Activated naive CD4-positive, alpha-beta T cell treated with anti-CD3 and anti-CD28 coated beads for 36 hours (primary cell): ENCODE measurements at regions of chr14 and their contacts with region 1.

Region 1: DNA sequence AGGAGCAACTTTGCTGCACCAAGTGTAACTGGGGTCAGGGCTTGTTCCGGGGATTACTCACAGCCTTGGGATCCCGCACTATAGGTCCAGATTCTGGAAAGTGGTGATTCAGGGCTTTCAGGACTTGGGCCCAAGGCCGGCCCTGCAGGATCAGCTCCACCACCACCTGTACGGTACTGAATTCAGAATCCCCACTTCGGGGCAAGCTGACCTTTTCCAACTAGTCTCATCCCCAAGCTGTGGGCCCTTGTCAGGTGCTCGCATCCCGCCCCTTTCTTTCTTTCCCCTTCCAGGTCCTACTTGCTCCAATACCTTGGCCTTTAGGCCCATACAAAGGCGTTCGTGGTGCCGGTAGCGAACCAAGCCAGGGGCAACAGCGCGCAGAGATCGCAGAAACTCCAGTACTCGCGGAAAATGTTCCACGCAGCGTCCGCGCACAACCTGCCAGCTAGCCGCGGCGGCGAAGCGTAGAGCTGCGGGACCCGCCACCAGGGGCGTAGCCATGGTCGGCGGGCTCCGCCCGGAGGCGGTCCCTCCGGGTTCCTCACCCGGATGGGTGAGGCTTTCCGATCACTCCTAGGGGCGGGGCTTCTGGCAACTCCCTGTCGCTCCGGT is 487 bp downstream of the TINF2 start:
- DNase-seq: peak; percentile 94
- H3K4me3 Mint-ChIP-seq: peak overlapping the region; percentile 97
- H3K27ac Mint-ChIP-seq: peak overlapping the region; percentile 100
- H3K4me1 Mint-ChIP-seq: peaks cover 49% of the 10 kb centered on the region
- H3K27me3 Mint-ChIP-seq: no peaks in the 10 kb centered on the region

Region 2: DNA sequence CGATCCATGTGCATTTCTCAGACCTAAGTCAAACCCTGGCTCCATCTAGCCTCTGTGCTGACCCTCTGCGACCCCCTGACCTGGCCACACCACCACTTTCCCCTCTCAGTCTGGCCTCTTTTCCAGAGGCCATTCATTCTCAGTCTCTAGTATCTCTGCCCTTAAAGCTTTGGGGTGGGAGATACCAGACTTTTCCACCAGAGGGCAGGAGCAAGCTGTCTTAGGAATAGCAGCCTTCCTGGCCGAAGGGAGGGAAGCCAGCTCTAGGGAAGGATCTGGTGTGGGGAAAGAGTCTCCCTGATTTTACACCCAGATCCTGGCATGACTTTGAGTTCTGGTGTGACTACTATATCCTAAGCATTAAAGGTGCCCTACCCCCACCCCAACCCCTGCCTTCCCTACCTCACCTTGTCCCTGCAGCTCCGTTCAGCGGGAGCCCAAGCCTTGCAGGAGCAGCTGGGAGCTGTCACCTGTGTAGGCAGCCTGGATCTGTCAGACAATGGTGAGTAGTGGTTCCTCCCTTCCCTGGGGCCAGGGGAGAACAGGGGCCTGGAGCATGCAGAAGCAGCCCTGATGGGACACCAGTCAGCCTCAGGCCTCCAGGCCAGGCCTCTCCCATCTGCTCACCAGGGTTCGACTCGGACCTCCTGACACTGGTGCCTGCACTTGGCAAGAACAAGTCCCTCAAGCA is 183.5 kb before region 1 on chr14:
- CTCF ChIA-PET with region 1: no interaction called
- intact Hi-C with region 1: loop called (anchors 2 kb)
- DNase-seq: peak; percentile 89
- H3K4me3 Mint-ChIP-seq: no peak overlapping the region
- H3K27ac Mint-ChIP-seq: peak overlapping the region; percentile 38
- H3K4me1 Mint-ChIP-seq: peaks cover 5% of the 10 kb centered on the region
- H3K27me3 Mint-ChIP-seq: peaks cover 2% of the 10 kb centered on the region

Region 3: GRCh38 chr14:24188251-24189058 is 53.5 kb before region 1 on chr14 and contains the start of gene IPO4:
- CTCF ChIA-PET with region 1: interaction called, 10 read pairs
- intact Hi-C with region 1: loop called (anchors 1 kb)
- DNase-seq: peak; percentile 97
- H3K4me3 Mint-ChIP-seq: peak within 1 kb of the TSS; percentile 85
- H3K27ac Mint-ChIP-seq: peak within 1 kb of the TSS; percentile 78
- H3K4me1 Mint-ChIP-seq: peaks cover 46% of the 10 kb centered on the region
- H3K27me3 Mint-ChIP-seq: no peaks in the 10 kb centered on the region
- total RNA-seq, gene IPO4: 64.2 to 74.5 TPM

Region 4: GRCh38 chr14:24271134-24271833 is 29.3 kb after region 1 on chr14 and contains the start of gene RABGGTA:
- CTCF ChIA-PET with region 1: interaction called, 43 read pairs
- intact Hi-C with region 1: loop called (anchors 1 kb)
- DNase-seq: peak; percentile 94
- H3K4me3 Mint-ChIP-seq: peak within 1 kb of the TSS; percentile 78
- H3K27ac Mint-ChIP-seq: peak within 1 kb of the TSS; percentile 95
- H3K4me1 Mint-ChIP-seq: peaks cover 43% of the 10 kb centered on the region
- H3K27me3 Mint-ChIP-seq: no peaks in the 10 kb centered on the region
- total RNA-seq, gene RABGGTA: 74.9 to 76.2 TPM

Region 5: GRCh38 chr14:24310646-24311604 is 69.0 kb after region 1 on chr14 and contains the start of gene LTB4R:
- CTCF ChIA-PET with region 1: interaction called, 121 read pairs
- intact Hi-C with region 1: loop called (anchors 1 kb)
- DNase-seq: peak; percentile 71
- H3K4me3 Mint-ChIP-seq: peak within 1 kb of the TSS; percentile 71
- H3K27ac Mint-ChIP-seq: peak within 1 kb of the TSS; percentile 68
- H3K4me1 Mint-ChIP-seq: peaks cover 64% of the 10 kb centered on the region
- H3K27me3 Mint-ChIP-seq: no peaks in the 10 kb centered on the region
- total RNA-seq, gene LTB4R: 10.6 to 11.4 TPM

Region 6: DNA sequence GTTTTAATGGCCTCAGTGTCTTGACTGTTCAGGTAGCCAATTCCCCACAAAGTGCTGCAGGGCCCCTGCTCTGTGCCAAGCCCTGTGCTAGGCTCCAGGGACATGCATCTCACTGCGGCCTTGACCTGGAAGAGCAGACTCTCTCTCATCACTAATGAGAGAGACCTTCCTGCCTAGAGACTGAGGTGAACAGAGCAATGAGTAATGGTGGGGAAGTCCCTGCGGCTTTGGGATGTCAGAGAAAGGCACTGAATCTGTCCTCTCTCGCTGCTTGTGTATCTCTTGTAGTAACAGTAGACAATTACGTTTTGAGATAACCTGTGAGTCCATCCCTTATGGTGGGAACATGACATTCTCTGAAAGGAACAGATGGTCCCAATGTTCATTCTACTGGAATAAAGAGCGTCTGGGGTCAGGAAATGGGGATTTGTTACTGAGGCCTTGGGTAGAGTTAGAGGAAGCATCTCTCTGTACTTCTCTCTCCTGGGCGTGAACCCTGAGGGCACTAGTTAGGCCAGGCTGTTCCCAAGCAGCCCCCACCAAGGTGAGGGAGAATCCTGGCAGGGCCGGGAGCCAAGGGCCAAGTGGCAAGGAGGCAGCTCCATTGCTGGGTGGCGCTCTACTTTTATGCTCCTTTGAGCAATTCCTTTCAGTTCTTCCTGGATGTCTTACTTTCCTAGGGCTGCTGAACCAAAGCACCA is 139.6 kb after region 1 on chr14:
- CTCF ChIA-PET with region 1: no interaction called
- intact Hi-C with region 1: no loop called
- DNase-seq: peak; percentile 53
- H3K4me3 Mint-ChIP-seq: no peak overlapping the region
- H3K27ac Mint-ChIP-seq: no peak overlapping the region
- H3K4me1 Mint-ChIP-seq: peaks cover 4% of the 10 kb centered on the region
- H3K27me3 Mint-ChIP-seq: peaks cover 5% of the 10 kb centered on the region